ENCODE measurements at regions of chr4 and their contacts with region 1.

Region 1: DNA sequence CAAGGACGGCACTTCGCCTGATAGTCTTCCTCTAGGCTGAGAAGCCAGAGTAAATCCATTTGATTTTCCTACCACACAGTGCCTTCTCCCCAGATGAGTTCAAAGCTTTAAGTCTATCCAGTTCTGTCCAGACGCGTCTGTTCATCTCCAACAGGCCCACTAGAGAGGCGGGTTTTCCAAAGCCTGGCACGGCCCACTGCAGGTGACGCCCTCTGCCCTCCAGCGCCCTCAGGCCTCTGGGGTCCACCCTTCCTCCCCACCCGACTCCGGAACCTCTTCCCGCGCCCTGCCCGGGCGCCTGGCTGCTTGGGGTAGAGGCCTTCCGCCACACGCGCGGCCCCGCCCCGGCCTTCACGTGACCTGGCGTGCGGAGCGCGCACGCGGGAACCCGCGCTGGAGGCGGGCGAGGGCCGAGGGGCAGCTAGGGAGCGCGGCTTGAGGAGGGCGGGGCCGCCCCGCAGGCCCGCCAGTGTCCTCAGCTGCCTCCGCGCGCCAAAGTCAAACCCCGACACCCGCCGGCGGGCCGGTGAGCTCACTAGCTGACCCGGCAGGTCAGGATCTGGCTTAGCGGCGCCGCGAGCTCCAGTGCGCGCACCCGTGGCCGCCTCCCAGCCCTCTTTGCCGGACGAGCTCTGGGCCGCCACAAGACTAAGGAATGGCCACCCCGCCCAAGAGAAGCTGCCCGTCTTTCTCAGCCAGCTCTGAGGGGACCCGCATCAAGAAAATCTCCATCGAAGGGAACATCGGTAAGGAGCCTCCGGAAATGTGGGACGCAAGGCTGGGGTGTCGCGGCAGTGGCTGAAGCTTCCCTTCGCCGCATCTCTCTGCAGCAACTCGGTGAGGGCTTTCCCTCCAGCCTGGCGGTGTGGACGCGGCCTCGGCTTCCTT is at the start of gene DCK:
- DNase-seq: peak; percentile 96
- H3K4me3 Mint-ChIP-seq: peak within 1 kb of the TSS; percentile 99
- H3K27ac Mint-ChIP-seq: peak within 1 kb of the TSS; percentile 94
- H3K4me1 Mint-ChIP-seq: peaks cover 45% of the 10 kb centered on the region
- H3K27me3 Mint-ChIP-seq: no peaks in the 10 kb centered on the region
- total RNA-seq, gene DCK: 35.6 and 37.0 TPM in 2 replicates

Region 2: DNA sequence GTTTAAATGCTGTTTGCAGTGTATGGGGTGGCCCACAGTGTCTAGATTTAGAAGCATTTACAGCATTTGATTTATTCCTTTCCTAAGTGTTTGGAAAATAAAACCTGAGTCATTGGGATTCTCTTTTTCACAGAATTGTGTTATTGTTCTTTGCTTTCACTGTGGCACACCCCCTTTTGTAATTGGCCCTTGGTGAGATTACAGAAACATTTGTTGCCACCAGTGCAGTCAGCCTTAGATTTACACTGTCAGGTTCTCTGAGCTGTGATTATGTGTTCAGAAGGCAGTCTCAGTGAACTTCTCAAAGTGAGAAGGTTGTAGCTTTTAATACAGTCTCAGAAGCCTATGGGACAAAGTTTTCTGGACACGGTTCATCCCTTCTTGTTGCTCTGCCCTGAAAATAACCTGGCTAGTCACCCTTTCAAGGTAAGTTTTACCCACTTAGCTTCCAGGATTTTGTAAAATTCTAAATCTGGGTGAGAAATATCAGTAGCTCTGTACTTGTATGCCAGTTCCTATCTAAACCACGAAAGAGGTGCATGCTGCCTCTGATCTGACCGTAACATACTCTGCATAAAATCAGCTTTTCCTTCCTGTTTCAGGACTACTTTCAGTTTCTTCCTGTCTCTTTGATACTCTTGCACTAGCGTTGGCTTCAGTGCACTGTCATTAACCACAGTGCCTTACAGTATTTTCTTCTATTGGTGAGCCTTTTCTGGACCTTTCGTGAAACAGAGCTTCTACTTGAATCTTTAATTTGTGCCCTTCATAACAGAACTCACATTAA is 259.1 kb before region 1 on chr4:
- intact Hi-C with region 1: loop called (anchors 10 kb)
- DNase-seq: peak; percentile 85
- H3K4me3 Mint-ChIP-seq: peak overlapping the region; percentile 73
- H3K27ac Mint-ChIP-seq: peak overlapping the region; percentile 48
- H3K4me1 Mint-ChIP-seq: peaks cover 33% of the 10 kb centered on the region
- H3K27me3 Mint-ChIP-seq: no peaks in the 10 kb centered on the region

Region 3: DNA sequence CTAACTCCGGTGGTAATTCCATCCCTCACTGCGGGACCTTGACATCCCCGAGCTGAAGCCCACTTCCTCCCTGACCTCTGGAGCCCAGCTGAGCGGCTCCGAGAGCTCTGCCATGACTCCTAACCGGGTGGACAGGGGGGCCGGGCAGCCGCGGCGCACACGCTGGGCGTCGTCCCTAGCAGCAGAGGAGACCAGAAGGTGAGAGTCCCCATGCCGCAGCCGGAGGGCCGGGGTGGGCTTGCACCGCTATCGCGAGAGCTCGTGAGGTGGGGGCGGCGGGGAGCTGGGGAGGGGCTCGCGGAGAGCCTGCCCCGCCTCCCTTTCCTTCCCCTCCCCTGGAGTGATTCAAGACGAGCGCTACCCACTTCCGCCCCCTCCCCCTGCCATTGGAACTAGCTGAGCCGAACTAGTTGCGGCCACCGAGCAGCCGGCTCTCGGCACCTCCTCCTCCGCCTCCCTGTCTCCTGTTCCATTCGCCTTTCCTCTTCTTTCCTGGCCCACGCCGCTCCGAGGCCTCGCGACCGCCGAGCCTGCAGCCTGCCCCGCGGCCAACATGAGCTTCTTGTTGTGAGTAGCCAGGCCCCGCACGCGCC is 91.3 kb before region 1 on chr4 and contains the start of gene MOB1B:
- intact Hi-C with region 1: loop called (anchors 1 kb)
- DNase-seq: peak; percentile 95
- H3K4me3 Mint-ChIP-seq: peak within 1 kb of the TSS; percentile 98
- H3K27ac Mint-ChIP-seq: peak within 1 kb of the TSS; percentile 92
- H3K4me1 Mint-ChIP-seq: peaks cover 18% of the 10 kb centered on the region
- H3K27me3 Mint-ChIP-seq: no peaks in the 10 kb centered on the region
- total RNA-seq, gene MOB1B: 23.1 and 24.1 TPM in 2 replicates

Region 4: DNA sequence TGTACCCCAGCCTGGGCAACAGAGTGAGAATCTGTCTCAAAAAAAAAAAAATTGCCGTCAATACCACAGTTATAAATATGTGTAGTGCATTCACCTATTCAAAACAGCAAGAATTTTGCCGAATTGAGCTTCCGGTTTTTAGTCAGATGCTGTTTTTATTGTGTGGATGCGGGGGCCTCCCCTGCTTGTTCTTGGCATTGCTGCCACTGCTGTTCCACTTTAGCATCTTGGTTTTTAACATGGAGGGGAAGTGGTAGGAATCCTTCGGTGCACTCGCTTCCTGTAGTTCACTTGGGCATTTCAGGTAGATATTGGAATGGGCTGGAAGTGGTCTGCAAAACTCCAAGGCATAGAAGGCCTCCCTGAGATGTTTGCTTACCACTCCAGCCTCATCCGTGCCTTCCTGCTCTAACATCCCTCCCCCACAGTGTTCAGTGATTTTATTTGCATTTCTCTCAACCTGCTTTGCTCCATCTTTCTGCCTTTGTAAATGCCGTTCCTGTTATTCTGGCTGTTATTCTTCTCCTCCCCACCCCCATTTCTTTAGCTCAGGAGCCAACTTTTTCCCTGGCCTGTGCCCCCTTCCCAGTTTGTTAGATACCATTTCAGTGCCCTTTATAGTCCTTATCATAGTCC is 65.8 kb before region 1 on chr4:
- intact Hi-C with region 1: loop called (anchors 2 kb)
- DNase-seq: peak; percentile 77
- H3K4me3 Mint-ChIP-seq: peak overlapping the region; percentile 25
- H3K27ac Mint-ChIP-seq: peak overlapping the region; percentile 30
- H3K4me1 Mint-ChIP-seq: peaks cover 36% of the 10 kb centered on the region
- H3K27me3 Mint-ChIP-seq: no peaks in the 10 kb centered on the region

Region 5: DNA sequence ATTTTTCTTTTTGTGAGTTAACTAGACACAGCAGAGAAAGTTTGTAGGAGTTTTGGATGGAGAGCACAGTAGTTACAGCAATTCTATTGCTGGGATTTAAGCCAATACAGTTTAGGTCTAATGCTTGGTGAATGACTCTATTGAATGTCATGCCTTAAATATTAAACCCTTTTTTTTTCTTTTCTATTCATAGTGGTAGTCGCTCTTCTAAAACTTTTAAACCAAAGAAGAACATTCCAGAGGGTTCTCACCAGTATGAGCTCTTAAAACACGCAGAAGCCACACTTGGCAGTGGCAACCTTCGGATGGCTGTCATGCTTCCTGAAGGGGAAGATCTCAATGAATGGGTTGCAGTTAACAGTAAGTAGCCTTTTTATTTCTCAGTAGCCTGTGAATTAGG is 34.7 kb before region 1 on chr4:
- intact Hi-C with region 1: no loop called
- DNase-seq: no peak
- H3K4me3 Mint-ChIP-seq: no peak overlapping the region
- H3K27ac Mint-ChIP-seq: no peak overlapping the region
- H3K4me1 Mint-ChIP-seq: peaks cover 4% of the 10 kb centered on the region
- H3K27me3 Mint-ChIP-seq: no peaks in the 10 kb centered on the region

Region 6: DNA sequence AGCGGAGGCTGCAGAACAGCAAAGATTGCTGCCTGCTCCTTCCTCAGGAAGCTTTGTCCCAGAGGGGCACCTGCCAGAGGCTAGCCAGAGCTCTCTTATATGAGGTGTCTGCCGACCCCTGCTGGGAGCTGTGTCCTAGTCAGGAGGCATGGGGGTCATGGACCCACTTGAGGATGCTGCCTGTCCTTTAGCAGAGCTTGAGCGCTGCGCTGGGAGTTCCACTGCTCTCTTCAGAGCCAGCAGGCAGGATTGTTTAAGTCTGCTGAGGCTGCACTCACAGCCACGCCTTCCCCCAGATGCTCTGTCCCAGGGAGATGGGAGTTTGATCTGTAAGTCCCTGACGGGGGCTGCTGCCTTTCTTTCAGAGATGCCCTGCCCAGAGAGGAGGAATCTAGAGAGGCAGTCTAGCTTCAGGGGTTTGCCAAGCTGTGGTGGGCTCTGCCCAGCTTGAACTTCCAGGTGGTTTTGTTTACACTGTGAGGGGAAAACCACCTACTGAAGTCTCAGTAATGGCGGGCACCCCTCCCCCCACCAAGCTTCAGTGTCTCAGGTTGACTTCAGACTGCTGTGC is 10.9 kb after region 1 on chr4:
- intact Hi-C with region 1: loop called (anchors 1 kb)
- DNase-seq: peak; percentile 87
- H3K4me3 Mint-ChIP-seq: peak overlapping the region; percentile 73
- H3K27ac Mint-ChIP-seq: peak overlapping the region; percentile 82
- H3K4me1 Mint-ChIP-seq: peaks cover 84% of the 10 kb centered on the region
- H3K27me3 Mint-ChIP-seq: no peaks in the 10 kb centered on the region

Region 7: DNA sequence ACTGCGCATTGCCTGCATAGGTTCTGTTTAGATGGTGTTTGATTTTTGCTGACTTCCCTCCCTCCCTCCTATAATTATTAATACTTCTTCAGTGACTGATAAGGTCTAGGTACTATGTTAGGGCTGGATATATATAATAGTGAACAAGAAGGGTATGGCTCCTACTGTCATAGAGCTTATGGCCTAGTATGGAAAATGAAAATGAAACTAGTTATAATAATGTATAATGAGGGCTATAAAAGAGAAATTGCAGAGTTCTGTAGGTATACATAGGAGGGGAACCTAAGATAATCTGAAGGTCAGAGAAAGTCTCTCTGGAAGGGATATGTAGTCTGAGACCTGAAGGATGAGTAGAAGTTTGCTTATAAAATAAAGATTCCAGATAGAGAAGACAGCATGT is 102.1 kb after region 1 on chr4:
- intact Hi-C with region 1: no loop called
- DNase-seq: no peak
- H3K4me3 Mint-ChIP-seq: no peak overlapping the region
- H3K27ac Mint-ChIP-seq: no peak overlapping the region
- H3K4me1 Mint-ChIP-seq: peaks cover 6% of the 10 kb centered on the region
- H3K27me3 Mint-ChIP-seq: peaks cover 6% of the 10 kb centered on the region